K562 (cell line): ENCODE measurements at regions of chr14 and their contacts with region 1.

Region 1: GRCh38 chr14:45134051-45134958 is at the start of gene FKBP3:
- DNase-seq: peak; percentile 91 to 96 (median 92)
- ATAC-seq: peak; percentile 89
- H3K4me3 ChIP-seq: peak within 1 kb of the TSS; percentile 91
- H3K27ac ChIP-seq: peak within 1 kb of the TSS; percentile 88
- H3K4me1 ChIP-seq: no peaks in the 10 kb centered on the region; a peak in 2 of 5 replicates
- H3K27me3 ChIP-seq: no peaks in the 10 kb centered on the region
- CTCF ChIP-seq: peak in 2 of 3 experiments; percentile 12 to 47; a peak in 2 of 6 replicates
- EP300 ChIP-seq: no peak
- POLR2A ChIP-seq: peak; percentile 81
- RAD21 ChIP-seq: peak in 1 of 2 experiments; percentile 25; a peak in 1 of 4 replicates
- polyA plus RNA-seq, gene FKBP3: 84.3 to 88.6 TPM

Region 2: DNA sequence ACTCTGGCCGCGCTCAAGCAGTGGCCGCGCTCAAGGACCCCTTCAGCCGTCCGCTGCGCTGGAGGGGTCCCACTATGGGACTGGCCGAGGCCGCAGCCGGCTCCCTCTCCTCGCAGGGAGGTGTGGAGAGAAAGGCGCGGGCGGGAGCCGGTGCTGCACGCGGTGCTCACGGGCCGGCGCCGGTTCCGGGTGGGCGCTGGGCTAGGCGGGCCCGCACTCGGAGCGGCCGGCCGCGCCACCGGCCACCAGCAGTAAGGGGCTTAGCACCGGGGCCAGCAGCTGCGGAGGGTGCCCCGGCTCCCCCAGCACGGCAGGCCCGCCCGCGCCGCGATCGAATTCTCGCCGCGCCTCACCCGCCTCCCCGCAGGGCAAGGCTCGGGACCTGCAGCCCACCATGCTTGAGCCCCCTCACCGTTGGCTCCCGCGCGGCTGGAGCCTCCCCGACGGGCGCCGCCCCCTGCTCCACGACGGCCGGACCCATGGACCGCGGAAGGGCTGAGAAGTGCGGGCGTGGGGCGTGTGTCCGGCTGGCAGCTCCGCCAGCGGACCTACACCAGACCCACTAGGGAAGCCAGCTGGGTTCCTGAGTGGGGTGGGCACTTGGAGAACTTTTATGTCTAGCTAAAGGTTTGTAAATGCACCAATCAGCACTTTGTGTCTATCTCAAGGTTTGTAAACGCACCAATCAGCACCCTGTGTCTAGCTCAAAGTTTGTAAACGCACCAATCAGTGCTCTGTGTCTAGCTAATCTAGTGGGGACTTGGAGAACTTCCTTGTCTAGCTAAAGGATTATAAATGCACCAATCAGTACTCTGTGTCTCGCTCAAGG is 222.1 kb before region 1 on chr14:
- CTCF ChIA-PET with region 1: no interaction called
- POLR2A ChIA-PET with region 1: no interaction called
- in situ Hi-C with region 1: no loop called
- intact Hi-C with region 1: loop called (anchors 5 kb)
- DNase-seq: no peak
- ATAC-seq: no peak
- H3K4me3 ChIP-seq: no peak overlapping the region
- H3K27ac ChIP-seq: no peak overlapping the region
- H3K4me1 ChIP-seq: no peaks in the 10 kb centered on the region; a peak in 1 of 5 replicates
- H3K27me3 ChIP-seq: no peaks in the 10 kb centered on the region
- CTCF ChIP-seq: no peak
- EP300 ChIP-seq: no peak
- POLR2A ChIP-seq: no peak
- RAD21 ChIP-seq: no peak

Region 3: DNA sequence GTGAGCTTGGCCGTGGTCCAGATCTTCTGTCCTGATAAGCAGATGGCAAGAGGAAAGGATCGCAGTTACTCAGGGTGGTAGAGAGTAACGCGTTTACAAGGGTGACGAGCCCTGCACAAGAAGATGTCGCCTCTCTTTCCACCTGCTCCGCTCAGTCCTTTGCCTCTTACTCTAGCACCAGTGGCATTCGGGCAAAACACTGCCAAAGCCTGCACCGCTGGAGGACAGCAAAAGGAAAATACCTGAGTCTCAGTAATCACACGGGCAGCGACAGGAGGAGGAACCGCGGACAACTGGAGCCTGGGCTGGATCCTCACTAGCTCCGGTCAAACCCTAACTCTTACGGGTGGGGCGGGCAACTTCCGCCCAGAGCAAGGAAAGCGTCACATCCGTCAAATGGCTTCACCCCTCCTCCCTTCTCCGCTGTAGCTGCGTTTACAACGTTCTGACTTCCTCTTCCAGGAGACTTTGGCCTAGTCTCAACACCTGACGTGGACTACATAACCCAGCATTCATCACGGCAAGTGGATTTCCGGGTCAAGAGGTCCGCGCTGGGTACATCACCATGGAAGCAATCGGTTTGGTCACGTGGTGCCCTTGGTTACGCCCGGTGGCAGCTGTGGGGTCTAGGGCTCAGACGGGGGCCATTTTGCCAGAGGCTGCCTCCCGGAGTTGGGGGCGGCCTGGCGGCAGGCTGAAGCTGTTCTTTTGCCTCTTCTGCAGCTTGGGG is 172.5 kb before region 1 on chr14 and contains the starts of genes KLHL28 and TOGARAM1:
- CTCF ChIA-PET with region 1: no interaction called
- POLR2A ChIA-PET with region 1: interaction called, 3 read pairs
- in situ Hi-C with region 1: no loop called
- intact Hi-C with region 1: loop called (anchors 2 kb)
- DNase-seq: peak; percentile 79 to 97 (median 84)
- ATAC-seq: peak; percentile 89
- H3K4me3 ChIP-seq: peak within 1 kb of the TSS; percentile 53
- H3K27ac ChIP-seq: peak within 1 kb of the TSS; percentile 77
- H3K4me1 ChIP-seq: no peaks in the 10 kb centered on the region; a peak in 3 of 5 replicates
- H3K27me3 ChIP-seq: no peaks in the 10 kb centered on the region
- CTCF ChIP-seq: no peak
- EP300 ChIP-seq: no peak
- POLR2A ChIP-seq: peak; percentile 87
- RAD21 ChIP-seq: no peak
- polyA plus RNA-seq, gene KLHL28: 4.8 to 7.5 TPM
- polyA plus RNA-seq, gene TOGARAM1: 1.3 to 1.6 TPM

Region 4: DNA sequence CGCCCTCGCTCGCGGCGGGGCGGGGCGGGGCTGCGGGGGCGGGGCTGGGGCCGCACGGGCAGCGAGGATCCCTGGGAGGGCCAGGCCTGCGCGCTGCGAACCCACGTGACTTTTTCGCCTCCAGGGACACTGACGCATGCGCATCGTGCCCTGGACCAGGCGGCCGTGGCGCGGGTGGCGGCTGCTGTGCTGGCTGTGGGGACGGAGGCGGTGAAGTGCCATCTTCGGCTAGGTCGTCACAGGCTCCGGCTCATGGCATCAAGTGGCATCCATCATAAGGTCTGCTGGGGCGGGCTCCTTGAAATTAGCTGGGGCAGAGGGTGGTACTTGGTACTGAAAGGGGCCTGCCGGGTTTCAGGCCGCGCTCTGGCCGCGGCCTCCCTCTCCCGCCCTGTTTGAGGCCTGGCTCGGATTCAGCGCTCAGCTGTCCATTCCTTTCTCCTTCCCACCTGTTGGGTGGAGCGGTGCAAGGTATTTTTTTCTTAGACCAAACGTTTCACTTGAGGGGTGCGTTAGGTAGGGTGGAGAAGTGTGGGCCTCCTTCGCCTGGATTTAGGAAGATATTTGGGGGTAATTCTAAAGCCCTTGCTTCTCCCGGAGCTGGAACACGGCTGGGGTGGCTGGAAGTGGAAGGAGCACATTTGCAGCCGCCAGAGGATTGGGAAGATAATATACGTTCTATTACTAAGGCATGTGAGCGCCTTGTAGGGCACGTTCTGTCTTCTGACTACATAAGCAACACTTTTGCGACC is 50.2 kb before region 1 on chr14 and contains the start of gene PRPF39:
- CTCF ChIA-PET with region 1: no interaction called
- POLR2A ChIA-PET with region 1: interaction called, 5 read pairs
- in situ Hi-C with region 1: no loop called
- intact Hi-C with region 1: loop called (anchors 1 kb)
- DNase-seq: peak; percentile 93 to 94 (median 94)
- ATAC-seq: peak; percentile 90
- H3K4me3 ChIP-seq: peak within 1 kb of the TSS; percentile 77
- H3K27ac ChIP-seq: peak within 1 kb of the TSS; percentile 83
- H3K4me1 ChIP-seq: no peaks in the 10 kb centered on the region; a peak in 2 of 5 replicates
- H3K27me3 ChIP-seq: no peaks in the 10 kb centered on the region
- CTCF ChIP-seq: no peak
- EP300 ChIP-seq: no peak
- POLR2A ChIP-seq: peak; percentile 88
- RAD21 ChIP-seq: no peak
- polyA plus RNA-seq, gene PRPF39: 13.3 to 21.2 TPM

Region 5: DNA sequence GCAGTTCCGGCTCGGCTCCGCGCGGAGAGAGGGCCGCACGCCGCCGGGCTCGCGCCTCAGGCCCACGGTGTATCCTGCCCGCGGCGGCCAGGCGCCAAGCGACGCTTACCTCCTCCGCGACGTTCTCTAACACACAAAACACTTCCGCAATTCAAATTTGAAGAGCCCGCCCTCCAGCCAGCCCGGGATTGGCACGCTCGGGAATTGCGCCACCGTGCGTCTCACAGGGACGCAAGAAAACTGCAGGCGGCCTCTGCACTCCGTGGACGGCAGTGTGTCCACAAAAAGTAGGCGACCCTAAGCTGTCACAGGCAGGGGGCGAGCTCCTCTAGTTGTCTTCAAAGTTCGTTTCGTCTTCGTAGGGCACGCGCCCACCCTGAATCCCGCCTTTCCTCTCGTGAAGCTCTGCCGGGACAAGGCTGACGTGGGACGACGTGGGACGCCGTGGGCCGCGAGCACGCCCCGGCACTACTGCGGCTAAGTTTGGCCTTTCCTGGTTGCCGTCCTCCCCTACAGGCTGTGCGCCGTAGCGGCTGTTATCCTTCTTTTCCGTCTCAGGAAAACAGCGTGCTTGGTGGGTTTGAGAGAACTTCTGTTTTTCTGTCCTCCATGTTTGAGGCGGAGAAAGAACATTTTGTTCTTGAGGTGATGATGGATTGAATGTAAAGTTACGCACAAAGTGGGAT is 118.9 kb after region 1 on chr14 and contains the start of gene MIS18BP1:
- CTCF ChIA-PET with region 1: no interaction called
- POLR2A ChIA-PET with region 1: no interaction called
- in situ Hi-C with region 1: no loop called
- intact Hi-C with region 1: loop called (anchors 2 kb)
- DNase-seq: peak; percentile 67 to 91 (median 75)
- ATAC-seq: peak; percentile 94
- H3K4me3 ChIP-seq: peak within 1 kb of the TSS; percentile 81
- H3K27ac ChIP-seq: peak within 1 kb of the TSS; percentile 86
- H3K4me1 ChIP-seq: peaks cover 7 to 12% of the 10 kb centered on the region in 2 experiments; a peak in 3 of 5 replicates
- H3K27me3 ChIP-seq: no peaks in the 10 kb centered on the region
- CTCF ChIP-seq: peak; percentile 68 to 78 (median 76)
- EP300 ChIP-seq: 0 out of 2 replicates have a peak, but pooled peaks have one; percentile 15
- POLR2A ChIP-seq: peak; percentile 75
- RAD21 ChIP-seq: peak; percentile 11 to 27; a peak in 3 of 4 replicates
- polyA plus RNA-seq, gene MIS18BP1: 5.0 to 5.5 TPM

Region 6: DNA sequence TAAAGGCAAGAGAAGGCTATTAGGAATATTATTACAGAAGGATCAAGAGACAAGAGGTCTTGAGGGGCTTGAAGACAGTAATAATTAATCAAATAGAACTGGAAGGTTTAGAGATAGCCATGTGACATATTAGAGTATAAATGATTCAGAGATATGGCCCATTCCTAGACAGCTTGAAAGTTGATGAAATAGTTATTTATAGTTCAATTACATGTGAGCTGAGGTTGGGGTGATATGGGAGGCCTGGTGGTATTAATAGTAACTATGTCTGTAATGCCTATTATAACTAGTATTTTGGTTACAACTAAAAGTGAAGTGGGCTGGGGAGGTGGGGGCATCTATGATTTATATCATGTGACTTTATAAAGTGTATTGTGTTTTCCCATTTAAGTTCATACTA is 132.8 kb after region 1 on chr14:
- CTCF ChIA-PET with region 1: no interaction called
- POLR2A ChIA-PET with region 1: no interaction called
- in situ Hi-C with region 1: no loop called
- intact Hi-C with region 1: loop called (anchors 5 kb)
- DNase-seq: no peak
- ATAC-seq: no peak
- H3K4me3 ChIP-seq: no peak overlapping the region
- H3K27ac ChIP-seq: no peak overlapping the region
- H3K4me1 ChIP-seq: no peaks in the 10 kb centered on the region
- H3K27me3 ChIP-seq: no peaks in the 10 kb centered on the region
- CTCF ChIP-seq: no peak
- EP300 ChIP-seq: no peak
- POLR2A ChIP-seq: no peak
- RAD21 ChIP-seq: no peak